Activated CD8-positive, alpha-beta T cell treated with anti-CD3 and anti-CD28 coated beads, Interleukin-2, amount 10 ng/mL, durations not matched to agents 7 days and 5 days (primary cell): ENCODE measurements at regions of chr11 and their contacts with region 1.

Region 1: GRCh38 chr11:61899146-61899841 is 7.9 kb upstream of the FADS3 start:
- DNase-seq: peak; percentile 94
- ATAC-seq: peak; percentile 92
- H3K4me3 Mint-ChIP-seq: no peak overlapping the region
- H3K27ac Mint-ChIP-seq: peak overlapping the region; percentile 45
- H3K4me1 Mint-ChIP-seq: peaks cover 7% of the 10 kb centered on the region
- H3K27me3 Mint-ChIP-seq: peaks cover 4% of the 10 kb centered on the region

Region 2: GRCh38 chr11:61827571-61828378 is 71.5 kb before region 1 on chr11 and contains the start of gene FADS2:
- CTCF ChIA-PET with region 1: interaction called, 10 read pairs
- POLR2A ChIA-PET with region 1: no interaction called
- DNase-seq: peak; percentile 96
- ATAC-seq: peak; percentile 86
- H3K4me3 Mint-ChIP-seq: peak within 1 kb of the TSS; percentile 89
- H3K27ac Mint-ChIP-seq: peak within 1 kb of the TSS; percentile 93
- H3K4me1 Mint-ChIP-seq: peaks cover 46% of the 10 kb centered on the region
- H3K27me3 Mint-ChIP-seq: peaks cover 2% of the 10 kb centered on the region
- total RNA-seq, gene FADS2: 395 to 416 TPM

Region 3: DNA sequence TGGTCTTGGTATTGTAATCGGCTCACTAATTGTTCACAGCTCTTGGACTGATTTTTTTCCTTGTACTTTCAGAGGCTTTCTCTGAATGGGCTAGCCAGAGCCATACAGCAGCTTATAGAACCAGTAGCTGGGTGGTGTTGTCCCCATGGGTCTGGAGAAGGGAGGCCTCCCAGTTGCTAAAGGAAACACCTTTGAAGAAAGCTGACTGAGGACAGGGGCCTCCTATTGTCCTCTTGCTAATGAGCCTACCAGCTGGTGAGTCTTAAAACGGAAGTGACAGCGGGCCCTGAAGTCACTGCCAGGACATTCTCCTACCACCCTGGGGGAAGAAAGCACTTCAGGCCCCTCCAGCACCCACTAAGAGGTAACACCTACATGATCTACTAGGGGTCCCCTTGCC is 17.9 kb before region 1 on chr11:
- CTCF ChIA-PET with region 1: interaction called, 10 read pairs
- POLR2A ChIA-PET with region 1: no interaction called
- DNase-seq: no peak
- ATAC-seq: no peak
- H3K4me3 Mint-ChIP-seq: no peak overlapping the region
- H3K27ac Mint-ChIP-seq: no peak overlapping the region
- H3K4me1 Mint-ChIP-seq: no peaks in the 10 kb centered on the region
- H3K27me3 Mint-ChIP-seq: no peaks in the 10 kb centered on the region

Region 4: GRCh38 chr11:61935861-61936260 is 36.6 kb after region 1 on chr11:
- CTCF ChIA-PET with region 1: interaction called, 11 read pairs
- POLR2A ChIA-PET with region 1: no interaction called
- DNase-seq: no peak
- ATAC-seq: no peak
- H3K4me3 Mint-ChIP-seq: no peak overlapping the region
- H3K27ac Mint-ChIP-seq: no peak overlapping the region
- H3K4me1 Mint-ChIP-seq: no peaks in the 10 kb centered on the region
- H3K27me3 Mint-ChIP-seq: peaks cover 22% of the 10 kb centered on the region

Region 5: GRCh38 chr11:61967116-61967923 is 68.0 kb after region 1 on chr11 and contains the start of gene FTH1:
- CTCF ChIA-PET with region 1: interaction called, 13 read pairs
- POLR2A ChIA-PET with region 1: interaction called, 3 read pairs
- DNase-seq: peak; percentile 90
- ATAC-seq: peak; percentile 76
- H3K4me3 Mint-ChIP-seq: peak within 1 kb of the TSS; percentile 93
- H3K27ac Mint-ChIP-seq: peak within 1 kb of the TSS; percentile 97
- H3K4me1 Mint-ChIP-seq: peaks cover 65% of the 10 kb centered on the region
- H3K27me3 Mint-ChIP-seq: no peaks in the 10 kb centered on the region
- total RNA-seq, gene FTH1: 709 to 727 TPM